Activated T-helper 1 cell treated with anti-CD3 and anti-CD28 coated beads, Interleukin-12 subunit alpha, Interleukin-12 subunit beta, Interleukin-2, Interleukin-4 antibody, amounts not matched to agents 30 ng/mL and 10 ng/mL and 1 ng/mL, durations not matched to agents 14 hours and 24 hours and 36 hours (primary cell): ENCODE measurements at regions of chr1 and their contacts with region 1.

Region 1: GRCh38 chr1:239898062-239898730 is 193.5 kb upstream of the FMN2 start:
- DNase-seq: peak; percentile 60
- H3K4me3 Mint-ChIP-seq: no peak overlapping the region
- H3K27ac Mint-ChIP-seq: no peak overlapping the region
- H3K4me1 Mint-ChIP-seq: no peaks in the 10 kb centered on the region
- H3K27me3 Mint-ChIP-seq: no peaks in the 10 kb centered on the region

Region 2: GRCh38 chr1:238252033-238252802 is 1646.0 kb before region 1 on chr1:
- intact Hi-C with region 1: loop called (anchors 5 kb)
- DNase-seq: no peak
- H3K4me3 Mint-ChIP-seq: no peak overlapping the region
- H3K27ac Mint-ChIP-seq: no peak overlapping the region
- H3K4me1 Mint-ChIP-seq: no peaks in the 10 kb centered on the region
- H3K27me3 Mint-ChIP-seq: no peaks in the 10 kb centered on the region

Region 3: DNA sequence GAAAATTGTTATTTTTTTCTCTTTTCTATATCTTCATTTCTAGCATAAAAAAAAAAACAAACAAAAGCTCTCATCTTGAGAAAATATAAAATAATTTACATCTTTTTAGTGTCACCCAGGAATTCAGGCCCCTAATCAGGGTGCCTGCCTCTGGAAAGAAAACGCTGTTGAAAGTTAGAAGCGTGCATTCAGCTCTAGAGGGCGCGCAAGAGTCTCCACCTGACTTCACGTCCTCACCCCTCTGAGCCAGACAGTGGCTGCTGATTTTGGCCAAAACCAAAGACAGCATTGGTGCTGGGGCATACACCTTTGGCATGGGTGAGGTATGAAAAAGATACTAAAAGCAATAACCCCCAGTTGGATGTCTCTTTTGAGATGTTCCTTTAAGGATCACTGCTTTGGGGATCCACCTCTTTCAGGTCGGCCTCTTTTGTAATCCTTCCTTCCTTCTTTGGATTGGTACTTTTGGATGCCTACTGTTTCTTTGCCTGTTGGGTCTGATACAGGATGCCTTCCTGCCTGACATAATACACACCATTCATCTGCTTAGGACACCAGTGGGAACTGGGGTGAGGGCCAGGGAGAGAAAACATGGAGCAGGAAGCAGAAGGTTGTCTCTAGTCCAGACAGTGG is 589.4 kb before region 1 on chr1:
- intact Hi-C with region 1: loop called (anchors 1 kb)
- DNase-seq: no peak
- H3K4me3 Mint-ChIP-seq: no peak overlapping the region
- H3K27ac Mint-ChIP-seq: no peak overlapping the region
- H3K4me1 Mint-ChIP-seq: no peaks in the 10 kb centered on the region
- H3K27me3 Mint-ChIP-seq: no peaks in the 10 kb centered on the region

Region 4: GRCh38 chr1:239587066-239587465 is 311.1 kb before region 1 on chr1:
- intact Hi-C with region 1: loop called (anchors 5 kb)
- DNase-seq: peak; percentile 5
- H3K4me3 Mint-ChIP-seq: no peak overlapping the region
- H3K27ac Mint-ChIP-seq: no peak overlapping the region
- H3K4me1 Mint-ChIP-seq: peaks cover 6% of the 10 kb centered on the region
- H3K27me3 Mint-ChIP-seq: peaks cover 2% of the 10 kb centered on the region

Region 5: DNA sequence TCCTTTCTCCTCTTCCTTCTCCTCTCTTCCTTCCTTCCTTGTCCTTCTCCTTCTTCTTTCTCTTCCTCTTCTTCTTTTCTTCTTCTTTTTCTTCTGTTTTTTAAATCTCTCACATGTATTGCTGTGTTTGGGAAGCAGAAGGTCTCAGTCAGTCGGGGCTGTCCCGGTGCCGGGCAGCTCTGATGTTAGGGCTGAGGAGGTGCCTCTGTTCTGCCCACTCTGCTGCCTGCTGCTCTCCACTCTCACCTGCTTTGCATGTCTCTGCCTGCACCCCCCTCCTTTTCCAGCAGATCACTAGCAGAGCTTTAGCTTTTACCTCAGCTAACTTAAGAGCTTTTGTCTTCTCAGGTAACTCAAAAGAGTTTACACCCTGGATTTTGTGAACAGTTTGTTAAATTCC is 235.2 kb before region 1 on chr1:
- intact Hi-C with region 1: loop called (anchors 10 kb)
- DNase-seq: no peak
- H3K4me3 Mint-ChIP-seq: no peak overlapping the region
- H3K27ac Mint-ChIP-seq: no peak overlapping the region
- H3K4me1 Mint-ChIP-seq: no peaks in the 10 kb centered on the region
- H3K27me3 Mint-ChIP-seq: no peaks in the 10 kb centered on the region

Region 6: GRCh38 chr1:239719642-239720258 is 178.4 kb before region 1 on chr1:
- intact Hi-C with region 1: loop called (anchors 5 kb)
- DNase-seq: peak; percentile 59
- H3K4me3 Mint-ChIP-seq: peak overlapping the region; percentile 90
- H3K27ac Mint-ChIP-seq: peak overlapping the region; percentile 96
- H3K4me1 Mint-ChIP-seq: peaks cover 37% of the 10 kb centered on the region
- H3K27me3 Mint-ChIP-seq: no peaks in the 10 kb centered on the region

Region 7: DNA sequence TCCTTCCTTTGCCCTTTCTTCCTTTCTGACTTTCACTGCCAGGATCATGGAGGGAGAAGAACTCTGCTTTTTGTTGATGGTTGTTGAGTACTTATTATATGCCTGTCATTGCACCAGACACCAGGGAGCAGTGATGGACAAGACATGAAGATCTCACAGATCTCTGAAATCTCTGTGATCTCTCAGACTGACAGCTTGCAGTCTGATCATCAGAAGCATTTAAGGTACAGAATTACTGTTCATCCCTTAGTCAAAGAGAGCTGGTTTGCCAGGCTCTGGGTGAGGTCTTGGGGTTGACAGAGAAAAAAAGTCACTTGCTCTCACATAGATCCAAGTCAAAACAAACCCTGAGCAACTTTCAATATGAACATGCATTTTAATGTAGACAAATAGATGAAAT is 106.0 kb before region 1 on chr1:
- intact Hi-C with region 1: loop called (anchors 1 kb)
- DNase-seq: no peak
- H3K4me3 Mint-ChIP-seq: no peak overlapping the region
- H3K27ac Mint-ChIP-seq: no peak overlapping the region
- H3K4me1 Mint-ChIP-seq: peaks cover 6% of the 10 kb centered on the region
- H3K27me3 Mint-ChIP-seq: peaks cover 2% of the 10 kb centered on the region

Region 8: DNA sequence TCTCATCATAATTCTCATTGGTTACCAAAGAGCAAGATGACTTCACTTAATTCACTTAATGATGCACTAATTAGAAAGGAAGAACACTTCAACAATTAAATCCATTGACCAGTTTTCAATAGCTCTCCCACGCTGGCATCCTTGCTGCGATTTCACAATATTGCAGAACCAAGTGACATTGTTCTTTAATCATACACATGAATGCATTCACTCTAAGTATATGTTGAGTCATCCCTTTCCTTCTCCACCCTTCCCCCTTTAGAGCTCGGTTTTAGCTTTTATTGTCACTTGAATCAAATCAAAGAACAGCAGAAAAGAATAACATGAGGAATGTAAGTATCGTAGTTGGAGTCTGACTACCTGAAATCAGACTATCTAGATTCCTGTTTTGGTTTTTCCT is 40.1 kb before region 1 on chr1:
- intact Hi-C with region 1: no loop called
- DNase-seq: no peak
- H3K4me3 Mint-ChIP-seq: no peak overlapping the region
- H3K27ac Mint-ChIP-seq: no peak overlapping the region
- H3K4me1 Mint-ChIP-seq: no peaks in the 10 kb centered on the region
- H3K27me3 Mint-ChIP-seq: no peaks in the 10 kb centered on the region